ENCODE measurements at regions of chr2 and their contacts with region 1.

Region 1: GRCh38 chr2:168118733-168119514 is 128.5 kb downstream of the STK39 start:
- DNase-seq: no peak
- ATAC-seq: peak; percentile 70 to 74

Region 2: GRCh38 chr2:166539340-166540162 is 1579.4 kb before region 1 on chr2:
- intact Hi-C with region 1: loop called in 1 of 2 experiments (anchors 5 kb)
- DNase-seq: no peak
- ATAC-seq: peak; percentile 67 to 75

Region 3: DNA sequence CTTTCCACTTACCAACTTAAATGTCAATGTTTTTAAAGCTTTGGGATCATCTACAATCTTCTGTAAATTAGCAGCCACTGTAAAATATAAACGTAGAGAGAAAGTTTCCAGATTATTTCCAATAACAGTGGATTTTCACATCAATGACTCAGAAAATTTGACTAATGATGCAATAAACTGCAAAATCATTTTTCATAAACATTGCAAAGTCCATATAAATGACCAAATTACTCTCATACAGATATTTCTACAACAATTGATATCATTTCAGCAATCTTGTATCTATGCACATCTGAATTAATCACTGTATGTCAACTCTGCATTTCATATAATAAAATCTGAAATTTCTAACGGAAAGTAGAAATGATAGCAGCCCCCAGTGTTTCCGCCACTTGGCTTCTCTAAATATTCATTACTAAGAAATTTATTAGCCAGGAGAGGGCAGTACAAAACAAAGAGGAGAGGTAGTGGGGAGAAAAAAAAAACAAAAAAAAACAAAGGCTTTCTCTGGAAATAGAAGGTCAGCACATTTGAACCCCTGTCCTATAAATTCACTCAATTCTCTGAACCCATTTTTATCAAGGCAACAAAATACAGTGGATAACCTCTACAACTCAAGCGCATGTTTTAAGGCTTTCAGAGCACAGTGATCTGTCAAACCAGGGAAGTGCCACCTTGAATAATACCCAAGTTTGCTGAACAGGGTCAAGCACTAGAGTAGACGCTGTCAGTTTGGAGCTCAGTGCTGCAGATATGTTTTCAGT is 154.1 kb before region 1 on chr2:
- intact Hi-C with region 1: loop called in 1 of 2 experiments (anchors 10 kb)
- DNase-seq: no peak
- ATAC-seq: peak in 1 of 2 donors; percentile 55